HCT116 (cell line): ENCODE measurements at regions of chr4 and their contacts with region 1.

Region 1: DNA sequence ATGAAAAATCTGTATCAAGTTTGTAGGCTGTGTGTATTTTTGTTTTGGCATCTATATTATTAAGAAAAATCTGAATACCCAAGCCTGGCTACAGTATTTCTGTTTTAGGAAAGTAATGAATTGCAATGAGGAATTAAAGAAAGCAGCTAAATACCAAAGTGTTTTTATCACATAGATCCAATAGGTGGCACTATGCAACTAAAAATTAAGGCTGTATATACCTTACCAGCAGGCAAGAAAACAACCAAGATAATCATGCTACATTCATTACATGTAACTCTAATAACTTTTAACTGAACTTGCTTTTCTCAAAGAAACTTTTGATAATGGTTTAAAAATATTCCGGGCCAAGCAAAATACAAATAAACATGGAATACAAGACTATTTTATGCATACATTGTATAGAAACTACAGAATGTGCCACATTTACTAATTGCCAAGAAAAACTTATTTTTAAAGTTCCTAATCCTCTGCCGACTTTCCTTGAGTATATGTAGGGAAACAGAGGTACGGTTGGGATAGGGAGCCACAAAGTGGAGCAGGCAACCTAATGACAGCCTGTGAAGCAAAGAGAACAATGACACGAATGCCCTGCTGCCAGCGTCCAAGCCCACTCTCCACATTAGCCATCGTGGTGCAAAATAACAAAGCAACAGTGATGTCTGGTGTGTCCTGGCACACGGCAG is 63.7 kb downstream of the SEC24D start:
- DNase-seq: peak; percentile 34
- ATAC-seq: peak; percentile 78
- H3K4me3 ChIP-seq: no peak overlapping the region
- H3K27ac ChIP-seq: no peak overlapping the region
- H3K4me1 ChIP-seq: peaks cover 2 to 8% of the 10 kb centered on the region in 2 experiments; a peak in 3 of 4 replicates
- H3K27me3 ChIP-seq: no peaks in the 10 kb centered on the region
- CTCF ChIP-seq: peak; percentile 40 to 73 (median 70); a peak in 4 of 6 replicates
- POLR2A ChIP-seq: no peak
- RAD21 ChIP-seq: peak; percentile 82

Region 2: DNA sequence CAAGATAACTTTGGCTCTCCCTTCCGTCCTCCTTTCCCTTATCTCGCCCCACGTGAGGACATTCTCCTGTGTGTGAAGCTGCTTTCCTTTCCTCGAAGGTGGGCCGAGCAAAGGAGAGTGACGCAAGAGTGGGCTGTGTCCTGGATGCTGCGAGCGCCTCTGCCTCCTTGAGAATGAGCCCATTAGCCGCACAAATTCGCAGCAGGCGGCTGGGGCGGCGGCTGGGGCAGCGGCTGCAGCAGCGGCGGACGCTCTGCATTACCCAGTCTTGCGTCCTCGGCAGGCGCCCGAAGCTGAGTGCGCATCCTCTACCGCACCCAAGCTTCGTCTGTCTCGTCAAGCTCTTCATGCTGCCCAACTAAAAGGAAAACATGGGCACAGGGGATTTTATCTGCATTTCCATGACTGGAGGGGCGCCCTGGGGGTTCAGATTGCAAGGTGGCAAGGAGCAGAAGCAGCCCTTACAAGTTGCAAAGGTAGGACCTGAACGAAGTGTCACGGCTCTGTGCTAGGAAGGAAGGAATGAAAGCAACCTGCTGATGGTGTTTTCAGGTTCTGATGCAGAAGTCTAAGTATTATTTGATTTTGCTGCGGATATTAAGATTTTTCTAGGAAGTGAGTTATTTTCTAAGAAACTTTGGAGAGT is 116.6 kb after region 1 on chr4 and contains the start of gene SYNPO2:
- CTCF ChIA-PET with region 1: interaction called, 10 read pairs
- POLR2A ChIA-PET with region 1: interaction called, 7 read pairs
- RAD21 ChIA-PET with region 1: interaction called in 1 of 2 experiments, 3 read pairs
- intact Hi-C with region 1: loop called (anchors 1 kb)
- DNase-seq: peak; percentile 57
- ATAC-seq: peak; percentile 94
- H3K4me3 ChIP-seq: peak within 1 kb of the TSS; percentile 52 to 59
- H3K27ac ChIP-seq: no peak within 1 kb of the TSS
- H3K4me1 ChIP-seq: peaks cover 2 to 22% of the 10 kb centered on the region in 2 experiments; a peak in 3 of 4 replicates
- H3K27me3 ChIP-seq: no peaks in the 10 kb centered on the region
- CTCF ChIP-seq: no peak
- POLR2A ChIP-seq: peak; percentile 30
- RAD21 ChIP-seq: peak; percentile 26; the same call in 1 of the 2 replicates
- total RNA-seq, gene SYNPO2: 0.93 TPM

Region 3: DNA sequence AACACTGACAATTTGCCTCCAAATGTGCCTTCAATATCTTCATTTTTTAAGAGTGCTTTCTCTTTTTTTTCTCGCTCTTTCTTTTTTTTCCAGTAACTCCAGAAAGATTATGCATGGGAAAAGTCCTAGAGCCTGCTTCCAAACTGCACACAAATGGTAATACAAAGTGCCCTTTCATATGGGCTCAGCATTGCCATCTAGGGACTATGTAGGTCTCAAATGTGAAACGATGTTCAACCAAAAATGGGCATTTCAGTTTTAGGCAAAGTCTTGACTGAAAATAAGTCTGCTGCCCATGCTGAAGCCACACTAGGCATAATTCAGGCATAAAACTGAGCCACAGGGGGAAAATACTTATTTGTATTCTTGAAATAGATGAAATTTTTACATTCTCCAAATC is 182.0 kb after region 1 on chr4:
- CTCF ChIA-PET with region 1: interaction called, 6 read pairs
- POLR2A ChIA-PET with region 1: no interaction called
- RAD21 ChIA-PET with region 1: no interaction called
- intact Hi-C with region 1: loop called (anchors 1 kb)
- DNase-seq: peak; percentile 15
- ATAC-seq: peak; percentile 65
- H3K4me3 ChIP-seq: no peak overlapping the region
- H3K27ac ChIP-seq: no peak overlapping the region
- H3K4me1 ChIP-seq: no peaks in the 10 kb centered on the region
- H3K27me3 ChIP-seq: no peaks in the 10 kb centered on the region
- CTCF ChIP-seq: peak in 2 of 3 experiments; percentile 29 to 44; a peak in 4 of 6 replicates
- POLR2A ChIP-seq: no peak
- RAD21 ChIP-seq: peak; percentile 33; the same call in 1 of the 2 replicates

Region 4: GRCh38 chr4:118969359-118969758 is 197.1 kb after region 1 on chr4:
- CTCF ChIA-PET with region 1: interaction called, 16 read pairs
- POLR2A ChIA-PET with region 1: no interaction called
- RAD21 ChIA-PET with region 1: interaction called in 1 of 2 experiments, 3 read pairs
- intact Hi-C with region 1: loop called (anchors 1 kb)
- DNase-seq: peak; percentile 32
- ATAC-seq: peak; percentile 98
- H3K4me3 ChIP-seq: no peak overlapping the region
- H3K27ac ChIP-seq: no peak overlapping the region
- H3K4me1 ChIP-seq: no peaks in the 10 kb centered on the region; a peak in 1 of 4 replicates
- H3K27me3 ChIP-seq: no peaks in the 10 kb centered on the region
- CTCF ChIP-seq: peak; percentile 56 to 81 (median 79)
- POLR2A ChIP-seq: no peak
- RAD21 ChIP-seq: peak; percentile 90

Region 5: DNA sequence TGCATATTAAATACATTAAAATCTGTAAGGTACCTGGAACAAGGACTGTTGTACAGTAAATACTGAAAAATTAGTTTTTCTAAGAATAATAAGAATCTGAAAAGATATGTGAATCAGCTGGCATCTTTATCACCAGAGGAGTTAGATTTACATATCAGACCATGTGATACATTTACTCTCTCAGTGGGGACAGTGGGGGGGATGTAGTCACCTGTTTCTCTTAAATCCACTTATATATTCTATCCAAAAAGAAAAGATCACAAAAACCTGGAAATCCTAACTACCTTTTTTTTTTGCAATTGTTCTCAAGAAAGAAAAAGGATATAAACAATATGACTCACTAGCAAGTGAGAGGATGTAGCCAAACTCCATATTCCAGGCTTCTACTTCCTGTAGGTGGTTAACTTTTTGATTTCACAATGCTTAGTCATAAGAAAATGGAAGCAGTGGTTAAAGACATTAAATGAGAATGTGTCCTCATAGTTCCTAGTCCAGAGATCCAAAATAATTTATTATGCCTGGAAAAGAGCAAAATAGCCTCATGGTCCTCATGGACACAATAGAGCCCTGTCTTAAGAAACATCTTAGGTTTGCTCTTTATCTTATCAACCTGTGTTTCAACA is 340.9 kb after region 1 on chr4:
- CTCF ChIA-PET with region 1: no interaction called
- POLR2A ChIA-PET with region 1: no interaction called
- RAD21 ChIA-PET with region 1: no interaction called
- intact Hi-C with region 1: no loop called
- DNase-seq: peak; percentile 26
- ATAC-seq: peak; percentile 57
- H3K4me3 ChIP-seq: no peak overlapping the region
- H3K27ac ChIP-seq: no peak overlapping the region
- H3K4me1 ChIP-seq: peaks cover 3 to 10% of the 10 kb centered on the region in 2 experiments; a peak in 3 of 4 replicates
- H3K27me3 ChIP-seq: no peaks in the 10 kb centered on the region
- CTCF ChIP-seq: no peak
- POLR2A ChIP-seq: no peak
- RAD21 ChIP-seq: 0 out of 2 replicates have a peak, but pooled peaks have one; percentile 3